PC-3 (cell line): ENCODE measurements at regions of chr2 and their contacts with region 1.

Region 1: GRCh38 chr2:20231632-20232031 is 6.7 kb upstream of the SDC1 start:
- DNase-seq: peak; percentile 99
- ATAC-seq: peak; percentile 81
- H3K4me3 ChIP-seq: peak overlapping the region; percentile 24; the same call in 1 of the 2 replicates
- H3K27ac ChIP-seq: peak overlapping the region; percentile 100
- H3K4me1 ChIP-seq: peaks cover 53% of the 10 kb centered on the region
- H3K27me3 ChIP-seq: no peaks in the 10 kb centered on the region
- CTCF ChIP-seq: no peak

Region 2: GRCh38 chr2:19955544-19956422 is 275.8 kb before region 1 on chr2:
- CTCF ChIA-PET with region 1: no interaction called
- POLR2A ChIA-PET with region 1: no interaction called
- intact Hi-C with region 1: loop called (anchors 2 kb)
- DNase-seq: peak; percentile 80
- ATAC-seq: peak; percentile 98
- H3K4me3 ChIP-seq: no peak overlapping the region
- H3K27ac ChIP-seq: no peak overlapping the region
- H3K4me1 ChIP-seq: no peaks in the 10 kb centered on the region
- H3K27me3 ChIP-seq: no peaks in the 10 kb centered on the region
- CTCF ChIP-seq: peak; percentile 95

Region 3: DNA sequence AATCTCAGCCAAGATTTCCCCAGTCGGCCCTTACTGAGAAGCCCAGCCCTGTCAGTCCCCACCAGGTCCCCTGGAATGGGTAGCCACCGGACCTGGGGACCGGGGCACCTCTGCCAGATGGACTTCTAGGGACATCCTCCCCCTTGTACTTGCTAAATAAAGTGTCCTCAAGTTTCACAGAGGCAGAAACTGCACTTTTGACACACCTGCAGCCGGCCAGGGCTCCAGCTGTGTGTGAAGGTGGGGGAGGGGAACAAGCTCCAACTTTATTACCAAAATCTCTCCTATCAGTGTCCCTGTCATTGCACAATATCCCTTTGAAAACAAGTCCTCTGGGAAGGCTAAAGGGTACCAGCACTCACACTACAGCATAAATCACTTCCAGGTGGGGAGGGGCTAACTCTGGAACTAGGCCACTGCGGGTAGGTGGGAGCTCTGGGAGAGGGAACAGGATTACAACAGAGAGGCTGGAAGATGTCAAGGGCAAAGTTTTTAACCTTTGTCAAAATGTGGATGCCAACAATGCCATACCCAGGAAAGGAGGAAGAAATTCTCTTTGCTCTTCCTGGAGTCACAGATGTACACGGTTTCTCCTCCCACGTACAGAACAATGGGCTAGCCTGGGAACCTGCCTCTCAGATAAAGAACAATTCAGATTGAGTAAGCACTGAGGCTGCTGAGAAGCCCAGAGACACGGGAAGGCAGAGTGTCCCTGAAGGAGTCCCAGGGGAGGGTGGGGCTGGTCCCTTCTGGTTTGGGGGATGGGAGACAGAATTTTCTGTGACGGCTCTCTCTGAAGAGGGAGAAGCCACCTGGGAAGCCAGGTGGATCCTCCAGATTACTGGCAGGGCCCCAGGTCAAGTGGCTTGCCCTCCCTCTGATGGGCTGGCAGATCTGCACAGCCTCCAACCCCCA is 17.7 kb before region 1 on chr2:
- CTCF ChIA-PET with region 1: no interaction called
- POLR2A ChIA-PET with region 1: interaction called, 12 read pairs
- intact Hi-C with region 1: no loop called
- DNase-seq: no peak
- ATAC-seq: no peak
- H3K4me3 ChIP-seq: no peak overlapping the region
- H3K27ac ChIP-seq: no peak overlapping the region
- H3K4me1 ChIP-seq: peaks cover 39% of the 10 kb centered on the region
- H3K27me3 ChIP-seq: no peaks in the 10 kb centered on the region
- CTCF ChIP-seq: no peak

Region 4: DNA sequence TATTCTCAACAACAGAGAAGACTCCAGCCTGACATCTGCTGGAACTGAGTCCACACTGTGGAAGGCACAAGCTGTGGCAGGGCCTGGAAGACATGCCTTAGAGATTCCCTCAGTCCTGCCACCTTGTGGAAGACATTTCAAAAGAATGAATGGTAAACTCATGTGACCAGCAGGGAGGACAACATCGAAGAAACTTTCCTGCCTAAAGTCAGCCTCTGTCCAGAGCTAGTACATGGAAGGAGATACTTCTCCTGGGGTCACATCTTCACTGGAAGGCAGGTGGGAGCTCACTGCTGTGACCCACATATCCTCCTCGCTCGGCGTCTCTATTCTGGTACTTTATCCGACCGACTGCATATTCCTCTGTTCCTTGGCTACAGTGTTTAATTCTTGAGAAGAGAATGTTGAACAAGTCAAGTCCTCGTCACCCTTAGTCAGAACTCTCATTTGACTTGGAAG is 59.5 kb after region 1 on chr2:
- CTCF ChIA-PET with region 1: interaction called, 11 read pairs
- POLR2A ChIA-PET with region 1: interaction called, 11 read pairs
- intact Hi-C with region 1: no loop called
- DNase-seq: peak; percentile 93
- ATAC-seq: peak; percentile 100
- H3K4me3 ChIP-seq: no peak overlapping the region
- H3K27ac ChIP-seq: peak overlapping the region; percentile 2; the same call in 1 of the 2 replicates
- H3K4me1 ChIP-seq: peaks cover 15% of the 10 kb centered on the region
- H3K27me3 ChIP-seq: no peaks in the 10 kb centered on the region
- CTCF ChIP-seq: peak; percentile 84

Region 5: GRCh38 chr2:20314562-20315501 is 83.2 kb after region 1 on chr2:
- CTCF ChIA-PET with region 1: interaction called, 11 read pairs
- POLR2A ChIA-PET with region 1: interaction called, 14 read pairs
- intact Hi-C with region 1: no loop called
- DNase-seq: peak; percentile 32
- ATAC-seq: peak; percentile 70
- H3K4me3 ChIP-seq: no peak overlapping the region
- H3K27ac ChIP-seq: no peak overlapping the region
- H3K4me1 ChIP-seq: no peaks in the 10 kb centered on the region
- H3K27me3 ChIP-seq: no peaks in the 10 kb centered on the region
- CTCF ChIP-seq: no peak

Region 6: DNA sequence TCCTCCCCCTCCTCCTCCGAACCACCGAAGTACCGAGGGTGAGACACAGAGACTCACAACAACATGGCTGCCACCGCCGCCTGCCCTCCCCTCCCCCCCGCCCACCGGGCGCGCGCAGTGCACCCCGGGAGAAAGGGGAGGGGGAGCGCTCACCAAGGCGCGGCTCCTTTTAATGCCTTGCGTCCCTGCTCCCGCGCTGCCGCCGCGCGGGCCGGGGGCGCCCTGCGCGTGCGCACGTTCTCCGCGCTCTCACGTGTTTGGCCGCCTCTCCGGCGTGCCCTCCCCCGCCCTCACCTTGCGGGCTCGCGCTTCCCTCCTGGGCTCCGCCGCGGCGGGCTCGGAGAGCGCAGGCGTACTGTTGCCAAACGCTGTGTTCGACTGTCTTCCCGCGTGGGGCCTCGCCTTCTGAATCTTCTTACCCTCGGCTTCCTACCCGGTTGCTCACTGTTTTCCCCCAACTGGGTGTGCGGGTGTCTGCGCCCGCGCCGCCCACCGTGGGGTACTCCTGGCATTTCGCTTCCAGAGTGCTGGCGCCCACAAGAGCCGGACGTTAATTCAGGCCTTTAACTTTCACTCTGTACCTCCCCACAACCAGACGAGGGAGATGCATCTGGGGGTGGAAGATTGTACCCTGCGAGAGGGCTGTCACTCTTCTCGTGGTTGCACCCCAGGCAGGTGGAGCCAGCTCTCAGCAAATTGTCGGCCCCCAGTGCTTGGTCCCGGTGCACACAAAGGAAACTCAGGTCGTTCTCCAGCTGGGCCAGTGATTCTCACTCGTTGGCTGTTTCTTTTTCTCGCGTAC is 119.3 kb after region 1 on chr2 and contains the start of gene PUM2:
- CTCF ChIA-PET with region 1: no interaction called
- POLR2A ChIA-PET with region 1: interaction called, 14 read pairs
- intact Hi-C with region 1: no loop called
- DNase-seq: peak; percentile 98
- ATAC-seq: peak; percentile 77
- H3K4me3 ChIP-seq: peak within 1 kb of the TSS; percentile 92
- H3K27ac ChIP-seq: peak within 1 kb of the TSS; percentile 87
- H3K4me1 ChIP-seq: peaks cover 35% of the 10 kb centered on the region
- H3K27me3 ChIP-seq: no peaks in the 10 kb centered on the region
- CTCF ChIP-seq: no peak
- total RNA-seq, gene PUM2: 14.9 and 25.3 TPM in 2 replicates